ENCODE measurements at regions of chr20 and their contacts with region 1.

Region 1: GRCh38 chr20:36273414-36274180 is 32.5 kb upstream of the DLGAP4 start:
- DNase-seq: peak; percentile 42
- ATAC-seq: no peak
- H3K4me3 Mint-ChIP-seq: no peak overlapping the region
- H3K27ac Mint-ChIP-seq: no peak overlapping the region
- H3K4me1 Mint-ChIP-seq: no peaks in the 10 kb centered on the region
- H3K27me3 Mint-ChIP-seq: peaks cover 2% of the 10 kb centered on the region

Region 2: DNA sequence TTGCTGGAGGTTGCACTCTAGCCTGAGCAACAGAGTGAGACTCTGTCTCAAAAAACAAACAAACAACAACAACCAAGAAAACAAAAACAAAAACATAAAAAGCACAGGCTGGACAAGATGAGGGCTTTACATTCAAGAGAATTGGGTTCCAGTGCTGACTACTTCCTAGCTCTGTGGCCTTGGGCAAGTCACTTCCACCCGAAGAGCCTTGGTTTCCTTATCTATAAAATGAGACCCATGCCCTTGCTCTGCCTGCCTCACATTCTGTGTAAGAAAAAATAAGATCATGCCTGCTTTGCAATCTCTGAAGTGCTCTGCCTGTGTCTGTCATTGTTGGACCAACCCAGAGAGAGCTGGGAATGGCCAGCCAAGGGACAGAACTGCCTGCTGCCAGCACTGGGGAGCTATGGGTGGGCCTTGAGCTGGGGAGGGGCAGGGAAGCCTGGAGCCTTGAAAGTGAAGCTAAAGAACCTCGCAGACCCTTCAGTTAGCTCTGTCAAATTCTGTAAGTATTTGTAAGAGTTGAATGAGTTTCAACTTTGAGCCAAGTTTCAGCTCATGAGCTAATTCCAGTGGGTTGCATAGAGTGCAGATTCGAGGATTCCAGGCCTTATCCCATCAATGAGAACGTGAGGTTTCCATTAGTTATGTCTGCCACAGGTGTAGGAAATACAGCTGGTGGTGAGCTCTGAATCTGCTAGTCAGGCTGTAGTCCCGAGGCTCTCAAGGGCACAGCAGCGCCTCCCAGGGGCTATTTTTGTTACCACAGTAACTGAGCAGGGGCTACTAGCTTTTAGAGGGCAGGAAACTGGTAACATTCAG is 125.8 kb after region 1 on chr20:
- CTCF ChIA-PET with region 1: interaction called, 6 read pairs
- POLR2A ChIA-PET with region 1: no interaction called
- intact Hi-C with region 1: loop called in 1 of 2 experiments (anchors 1 kb)
- DNase-seq: peak; percentile 76
- ATAC-seq: peak; percentile 83
- H3K4me3 Mint-ChIP-seq: no peak overlapping the region
- H3K27ac Mint-ChIP-seq: no peak overlapping the region
- H3K4me1 Mint-ChIP-seq: no peaks in the 10 kb centered on the region
- H3K27me3 Mint-ChIP-seq: peaks cover 16% of the 10 kb centered on the region

Region 3: GRCh38 chr20:36439040-36439730 is 165.6 kb after region 1 on chr20:
- CTCF ChIA-PET with region 1: interaction called, 15 read pairs
- POLR2A ChIA-PET with region 1: no interaction called
- intact Hi-C with region 1: loop called (anchors 1 to 2 kb)
- DNase-seq: peak; percentile 81
- ATAC-seq: peak; percentile 45
- H3K4me3 Mint-ChIP-seq: no peak overlapping the region
- H3K27ac Mint-ChIP-seq: no peak overlapping the region
- H3K4me1 Mint-ChIP-seq: peaks cover 2% of the 10 kb centered on the region
- H3K27me3 Mint-ChIP-seq: no peaks in the 10 kb centered on the region

Measured in activated CD4-positive, alpha-beta T cell treated with anti-CD3 and anti-CD28 coated beads for 36 hours (primary cell).